Left cardiac atrium (tissue), 4 donors: ENCODE measurements at regions of chr6 and their contacts with region 1.

Region 1: GRCh38 chr6:109382576-109383437 is 540 bp upstream of the CD164 start:
- DNase-seq: peak; percentile 95
- ATAC-seq: peak; percentile 89 to 94

Region 2: GRCh38 chr6:109094363-109095026 is 288.3 kb before region 1 on chr6 and contains the start of gene SESN1:
- intact Hi-C with region 1: loop called in 1 of 2 experiments (anchors 5 kb)
- DNase-seq: peak; percentile 94
- ATAC-seq: peak; percentile 92 to 96
- total RNA-seq, gene SESN1: 22.4 to 54.0 TPM

Region 3: DNA sequence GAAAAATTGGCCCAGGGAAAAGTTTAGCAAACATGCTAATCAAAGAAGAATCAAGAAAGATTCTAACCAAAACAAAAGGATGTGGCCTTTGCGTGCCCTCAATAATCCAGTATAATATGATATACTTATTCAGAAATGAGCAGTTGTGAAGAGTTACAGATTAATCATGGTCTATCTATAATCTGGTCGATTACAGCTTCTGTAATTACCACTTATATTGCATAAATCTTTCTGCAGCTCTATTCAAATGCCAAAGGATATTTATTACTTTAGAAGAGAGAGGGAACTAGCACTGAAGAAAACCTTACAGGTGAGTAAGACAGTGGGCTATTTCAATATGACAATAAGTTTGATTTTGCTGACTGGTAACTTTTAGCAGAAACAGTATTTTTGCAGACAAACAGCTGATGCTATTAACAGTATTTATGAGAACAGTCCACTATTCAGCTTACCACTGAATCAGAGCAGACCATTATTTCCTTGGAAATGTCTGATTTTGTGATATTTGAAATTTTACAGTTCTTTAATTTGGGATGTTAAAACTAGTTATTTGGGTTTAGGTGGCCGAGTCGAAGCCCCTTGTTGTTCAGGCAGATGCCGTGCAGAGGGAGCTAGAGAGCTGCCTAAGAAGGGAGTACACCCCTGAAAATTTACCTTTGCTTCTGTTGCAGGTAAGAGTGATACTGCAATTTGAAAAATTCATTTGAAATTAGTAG is 195.2 kb before region 1 on chr6:
- intact Hi-C with region 1: loop called (anchors 1 to 5 kb)
- DNase-seq: peak; percentile 39
- ATAC-seq: peak; percentile 62 to 63

Region 4: GRCh38 chr6:109308018-109308492 is 74.8 kb before region 1 on chr6:
- intact Hi-C with region 1: loop called in 1 of 2 experiments (anchors 5 kb)
- DNase-seq: peak; percentile 74
- ATAC-seq: peak; percentile 84 to 93